ENCODE measurements at regions of chr2 and their contacts with region 1.

Region 1: DNA sequence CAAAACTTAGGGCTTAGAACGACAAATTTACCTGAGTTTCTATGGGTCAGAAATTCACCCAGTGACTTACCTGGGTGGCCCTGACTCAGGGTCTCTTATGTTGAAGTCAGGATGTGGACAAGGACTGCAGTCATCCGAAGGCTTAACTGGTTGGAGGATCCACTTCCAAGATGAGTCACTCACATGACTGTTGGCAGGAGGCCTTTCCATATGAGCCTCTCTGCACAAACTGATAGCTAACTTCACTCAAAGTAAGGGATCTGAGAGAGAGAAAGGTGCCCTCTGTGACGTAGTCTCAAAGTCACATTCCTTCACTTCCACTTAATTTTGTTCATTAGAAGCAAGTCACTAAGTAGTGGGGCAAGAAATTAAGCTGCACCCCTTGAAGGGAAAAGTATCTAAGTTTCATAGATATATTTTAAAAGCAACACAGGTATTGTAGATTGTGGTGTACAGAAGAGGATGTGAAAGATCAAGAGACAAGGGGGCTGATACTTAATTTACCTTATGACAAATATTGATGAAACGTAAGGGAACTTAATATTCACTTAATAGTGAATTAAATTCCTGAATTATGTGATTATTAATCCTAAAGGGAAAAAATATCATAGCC is 48.4 kb downstream of the TANK start:
- DNase-seq: no peak
- ATAC-seq: no peak
- H3K4me3 Mint-ChIP-seq: no peak overlapping the region
- H3K27ac Mint-ChIP-seq: no peak overlapping the region
- H3K4me1 Mint-ChIP-seq: peaks cover 16% of the 10 kb centered on the region
- H3K27me3 Mint-ChIP-seq: no peaks in the 10 kb centered on the region
- CTCF ChIP-seq: no peak

Region 2: GRCh38 chr2:160910681-160911080 is 298.0 kb before region 1 on chr2:
- CTCF ChIA-PET with region 1: no interaction called
- POLR2A ChIA-PET with region 1: no interaction called
- intact Hi-C with region 1: no loop called
- DNase-seq: no peak
- ATAC-seq: no peak
- H3K4me3 Mint-ChIP-seq: no peak overlapping the region
- H3K27ac Mint-ChIP-seq: no peak overlapping the region
- H3K4me1 Mint-ChIP-seq: no peaks in the 10 kb centered on the region
- H3K27me3 Mint-ChIP-seq: peaks cover 5% of the 10 kb centered on the region
- CTCF ChIP-seq: no peak

Region 3: DNA sequence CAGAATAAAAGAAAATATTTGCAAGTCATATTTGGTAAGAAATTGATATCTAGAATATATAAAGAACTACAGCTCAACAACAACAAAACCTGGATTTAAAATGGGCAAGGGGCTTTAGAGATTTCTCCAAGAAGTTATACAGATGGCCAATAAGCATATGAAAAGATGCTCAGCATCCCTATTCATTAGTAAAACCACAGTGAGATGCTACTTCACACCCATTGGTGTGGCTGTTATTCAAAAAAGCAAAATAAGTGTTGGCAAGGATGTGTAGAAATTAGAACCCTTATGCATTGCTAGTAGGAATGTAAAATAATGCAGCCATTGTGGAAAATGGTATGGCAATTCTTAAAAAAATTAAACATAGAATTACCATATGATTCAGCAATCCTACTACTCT is 18.6 kb before region 1 on chr2:
- CTCF ChIA-PET with region 1: no interaction called
- POLR2A ChIA-PET with region 1: no interaction called
- intact Hi-C with region 1: loop called (anchors 2 kb)
- DNase-seq: no peak
- ATAC-seq: no peak
- H3K4me3 Mint-ChIP-seq: no peak overlapping the region
- H3K27ac Mint-ChIP-seq: no peak overlapping the region
- H3K4me1 Mint-ChIP-seq: peaks cover 59% of the 10 kb centered on the region
- H3K27me3 Mint-ChIP-seq: no peaks in the 10 kb centered on the region
- CTCF ChIP-seq: no peak

Measured in activated B cell treated with CpG ODN at 0.5 μM for 24 hours (primary cell).